ENCODE measurements at regions of chr3 and their contacts with region 1.

Region 1: DNA sequence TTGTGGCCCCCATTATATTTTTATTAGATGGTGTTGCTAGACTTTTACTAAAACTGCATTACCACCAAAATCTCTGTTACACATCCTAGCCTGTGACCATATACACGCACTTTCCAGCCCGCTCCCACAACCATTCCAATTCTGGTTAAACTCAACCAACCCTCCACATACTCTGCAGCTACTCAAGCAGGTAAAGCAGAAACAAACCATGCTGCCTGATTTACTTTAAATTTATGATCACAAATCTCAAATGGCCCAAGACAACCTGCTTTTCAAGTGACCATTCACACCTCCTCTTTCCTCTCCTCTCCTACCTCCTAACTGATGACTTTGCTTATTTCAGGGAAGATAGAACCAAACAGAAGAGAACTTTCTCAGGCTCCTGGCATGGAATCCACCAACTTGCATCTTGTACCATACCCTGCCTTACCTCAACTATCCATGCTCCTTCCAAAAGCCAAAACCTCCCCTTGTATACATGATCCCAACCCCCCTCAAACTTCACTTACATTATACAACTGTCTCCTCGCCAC is 18.5 kb downstream of the ULK4 start:
- DNase-seq: no peak
- ATAC-seq: no peak
- H3K4me3 ChIP-seq: no peak overlapping the region
- H3K27ac ChIP-seq: no peak overlapping the region
- H3K4me1 ChIP-seq: no peaks in the 10 kb centered on the region
- H3K27me3 ChIP-seq: no peaks in the 10 kb centered on the region
- CTCF ChIP-seq: no peak
- POLR2A ChIP-seq: no peak
- RAD21 ChIP-seq: no peak

Region 2: GRCh38 chr3:42043027-42043796 is 99.8 kb after region 1 on chr3:
- CTCF ChIA-PET with region 1: no interaction called
- POLR2A ChIA-PET with region 1: interaction called, 13 read pairs
- dilution Hi-C with region 1: no loop called
- in situ Hi-C with region 1: no loop called
- intact Hi-C with region 1: no loop called
- DNase-seq: peak; percentile 49
- ATAC-seq: peak; percentile 45
- H3K4me3 ChIP-seq: no peak overlapping the region
- H3K27ac ChIP-seq: peak overlapping the region; percentile 68; the same call in 1 of the 2 replicates
- H3K4me1 ChIP-seq: peaks cover 15% of the 10 kb centered on the region
- H3K27me3 ChIP-seq: no peaks in the 10 kb centered on the region
- CTCF ChIP-seq: no peak
- POLR2A ChIP-seq: no peak
- RAD21 ChIP-seq: no peak

Measured in IMR-90 (cell line).